ENCODE measurements at regions of chr3 and their contacts with region 1.

Region 1: GRCh38 chr3:57597122-57597923 is at the start of gene ARF4:
- DNase-seq: peak; percentile 99
- ATAC-seq: peak; percentile 93
- H3K4me3 Mint-ChIP-seq: peak within 1 kb of the TSS; percentile 90
- H3K27ac Mint-ChIP-seq: peak within 1 kb of the TSS; percentile 100
- H3K4me1 Mint-ChIP-seq: peaks cover 35% of the 10 kb centered on the region
- H3K27me3 Mint-ChIP-seq: no peaks in the 10 kb centered on the region
- CTCF ChIP-seq: no peak
- total RNA-seq, gene ARF4: 52.0 to 55.2 TPM

Region 2: GRCh38 chr3:57184526-57184925 is 412.8 kb before region 1 on chr3:
- CTCF ChIA-PET with region 1: no interaction called
- POLR2A ChIA-PET with region 1: no interaction called
- intact Hi-C with region 1: no loop called
- DNase-seq: no peak
- ATAC-seq: no peak
- H3K4me3 Mint-ChIP-seq: no peak overlapping the region
- H3K27ac Mint-ChIP-seq: no peak overlapping the region
- H3K4me1 Mint-ChIP-seq: no peaks in the 10 kb centered on the region
- H3K27me3 Mint-ChIP-seq: peaks cover 3% of the 10 kb centered on the region
- CTCF ChIP-seq: no peak

Region 3: DNA sequence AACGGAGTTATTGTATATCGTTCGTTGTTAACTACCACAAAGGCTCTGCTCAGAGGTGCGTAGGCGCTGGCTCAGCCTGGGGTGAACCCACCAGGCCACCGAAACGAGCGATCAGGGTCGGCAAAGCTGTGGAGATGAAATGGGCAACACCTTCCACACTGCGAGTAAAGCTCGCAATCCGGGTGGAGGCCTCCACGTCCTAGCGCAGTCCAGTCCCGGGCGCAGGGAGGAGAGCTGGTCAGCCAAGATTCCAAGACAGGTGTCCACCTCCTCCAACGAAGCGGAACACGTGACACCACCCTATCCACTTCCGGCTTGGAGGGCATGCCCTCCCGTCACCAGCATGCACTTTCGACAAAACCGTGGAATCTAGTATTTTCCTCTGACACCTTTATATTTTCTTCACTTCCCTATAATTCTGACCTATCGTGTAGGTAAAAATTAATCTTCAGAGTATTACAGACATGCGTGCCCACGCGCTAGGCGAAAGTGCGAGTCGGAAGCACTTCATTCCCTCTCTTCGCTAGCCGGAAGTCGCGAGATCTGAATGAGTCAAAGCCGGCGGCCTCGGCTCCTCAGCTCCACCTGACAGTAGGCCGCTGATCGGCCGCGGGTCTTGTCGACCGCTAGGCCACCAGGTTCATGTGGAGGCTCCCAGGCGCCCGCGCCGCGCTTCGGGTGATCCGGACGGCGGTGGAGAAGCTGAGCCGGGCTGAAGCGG is 41.4 kb before region 1 on chr3 and contains the start of gene PDE12:
- CTCF ChIA-PET with region 1: interaction called, 8 read pairs
- POLR2A ChIA-PET with region 1: interaction called, 47 read pairs
- intact Hi-C with region 1: loop called (anchors 5 kb)
- DNase-seq: peak; percentile 91
- ATAC-seq: peak; percentile 80
- H3K4me3 Mint-ChIP-seq: peak within 1 kb of the TSS; percentile 99
- H3K27ac Mint-ChIP-seq: peak within 1 kb of the TSS; percentile 99
- H3K4me1 Mint-ChIP-seq: peaks cover 24% of the 10 kb centered on the region
- H3K27me3 Mint-ChIP-seq: no peaks in the 10 kb centered on the region
- CTCF ChIP-seq: no peak
- total RNA-seq, gene PDE12: 25.4 to 29.9 TPM

Region 4: GRCh38 chr3:57622362-57622761 is 25.0 kb after region 1 on chr3:
- CTCF ChIA-PET with region 1: no interaction called
- POLR2A ChIA-PET with region 1: no interaction called
- intact Hi-C with region 1: no loop called
- DNase-seq: no peak
- ATAC-seq: no peak
- H3K4me3 Mint-ChIP-seq: no peak overlapping the region
- H3K27ac Mint-ChIP-seq: no peak overlapping the region
- H3K4me1 Mint-ChIP-seq: no peaks in the 10 kb centered on the region
- H3K27me3 Mint-ChIP-seq: no peaks in the 10 kb centered on the region
- CTCF ChIP-seq: no peak

Region 5: GRCh38 chr3:57692259-57693147 is 95.2 kb after region 1 on chr3 and contains the start of gene DENND6A:
- CTCF ChIA-PET with region 1: no interaction called
- POLR2A ChIA-PET with region 1: interaction called, 8 read pairs
- intact Hi-C with region 1: loop called (anchors 5 kb)
- DNase-seq: peak; percentile 80
- ATAC-seq: peak; percentile 86
- H3K4me3 Mint-ChIP-seq: peak within 1 kb of the TSS; percentile 88
- H3K27ac Mint-ChIP-seq: peak within 1 kb of the TSS; percentile 90
- H3K4me1 Mint-ChIP-seq: peaks cover 33% of the 10 kb centered on the region
- H3K27me3 Mint-ChIP-seq: no peaks in the 10 kb centered on the region
- CTCF ChIP-seq: no peak
- total RNA-seq, gene DENND6A: 10.1 to 13.1 TPM

Region 6: GRCh38 chr3:57715686-57716085 is 118.4 kb after region 1 on chr3:
- CTCF ChIA-PET with region 1: no interaction called
- POLR2A ChIA-PET with region 1: no interaction called
- intact Hi-C with region 1: no loop called
- DNase-seq: no peak
- ATAC-seq: no peak
- H3K4me3 Mint-ChIP-seq: no peak overlapping the region
- H3K27ac Mint-ChIP-seq: no peak overlapping the region
- H3K4me1 Mint-ChIP-seq: no peaks in the 10 kb centered on the region
- H3K27me3 Mint-ChIP-seq: no peaks in the 10 kb centered on the region
- CTCF ChIP-seq: no peak

Region 7: DNA sequence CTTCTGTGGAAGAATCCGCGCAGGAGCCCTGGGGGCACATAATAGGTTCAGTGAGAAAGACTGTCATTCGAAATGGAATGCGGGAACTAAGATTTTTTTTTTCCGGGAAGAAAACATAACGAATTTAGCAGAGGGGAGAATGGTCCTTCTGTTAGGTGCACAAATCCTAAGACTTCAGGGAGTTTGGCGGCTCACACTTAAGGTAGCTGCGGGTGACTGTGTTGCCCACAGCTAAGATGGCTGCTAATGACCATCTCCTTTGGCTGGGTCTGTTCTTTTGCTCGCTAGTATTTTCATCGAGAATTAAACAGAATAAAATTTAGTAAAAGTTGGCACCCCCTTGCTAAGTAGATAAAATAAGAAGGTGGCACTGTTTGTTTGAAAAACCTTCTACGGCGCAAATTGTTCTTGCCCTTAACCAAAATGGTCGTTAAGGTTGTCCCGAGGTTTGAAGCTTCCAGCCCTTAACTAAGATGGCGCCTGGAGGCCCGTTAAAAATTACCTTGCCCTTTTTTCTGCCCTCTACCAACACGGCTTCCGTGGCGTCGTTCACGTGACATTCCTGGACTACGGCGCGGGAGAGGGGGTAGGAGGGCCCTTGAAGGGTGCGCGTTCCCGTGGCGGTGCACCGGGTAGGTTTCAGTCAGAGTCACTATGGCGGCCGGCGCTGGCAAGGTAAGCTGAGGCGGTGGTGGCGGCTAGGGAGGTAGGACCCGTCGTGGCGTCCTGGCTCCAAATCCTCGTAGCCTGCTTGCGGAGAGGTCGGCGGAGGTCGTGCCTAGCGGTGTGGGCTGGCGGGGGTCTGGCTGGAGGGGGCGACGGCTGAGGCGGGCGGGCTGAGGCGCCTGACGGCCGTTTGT is 158.6 kb after region 1 on chr3 and contains the start of gene SLMAP:
- CTCF ChIA-PET with region 1: interaction called, 4 read pairs
- POLR2A ChIA-PET with region 1: interaction called, 12 read pairs
- intact Hi-C with region 1: loop called (anchors 5 kb)
- DNase-seq: peak; percentile 98
- ATAC-seq: peak; percentile 94
- H3K4me3 Mint-ChIP-seq: peak within 1 kb of the TSS; percentile 96
- H3K27ac Mint-ChIP-seq: peak within 1 kb of the TSS; percentile 96
- H3K4me1 Mint-ChIP-seq: peaks cover 35% of the 10 kb centered on the region
- H3K27me3 Mint-ChIP-seq: no peaks in the 10 kb centered on the region
- CTCF ChIP-seq: no peak
- total RNA-seq, gene SLMAP: 45.8 to 47.3 TPM

Region 8: DNA sequence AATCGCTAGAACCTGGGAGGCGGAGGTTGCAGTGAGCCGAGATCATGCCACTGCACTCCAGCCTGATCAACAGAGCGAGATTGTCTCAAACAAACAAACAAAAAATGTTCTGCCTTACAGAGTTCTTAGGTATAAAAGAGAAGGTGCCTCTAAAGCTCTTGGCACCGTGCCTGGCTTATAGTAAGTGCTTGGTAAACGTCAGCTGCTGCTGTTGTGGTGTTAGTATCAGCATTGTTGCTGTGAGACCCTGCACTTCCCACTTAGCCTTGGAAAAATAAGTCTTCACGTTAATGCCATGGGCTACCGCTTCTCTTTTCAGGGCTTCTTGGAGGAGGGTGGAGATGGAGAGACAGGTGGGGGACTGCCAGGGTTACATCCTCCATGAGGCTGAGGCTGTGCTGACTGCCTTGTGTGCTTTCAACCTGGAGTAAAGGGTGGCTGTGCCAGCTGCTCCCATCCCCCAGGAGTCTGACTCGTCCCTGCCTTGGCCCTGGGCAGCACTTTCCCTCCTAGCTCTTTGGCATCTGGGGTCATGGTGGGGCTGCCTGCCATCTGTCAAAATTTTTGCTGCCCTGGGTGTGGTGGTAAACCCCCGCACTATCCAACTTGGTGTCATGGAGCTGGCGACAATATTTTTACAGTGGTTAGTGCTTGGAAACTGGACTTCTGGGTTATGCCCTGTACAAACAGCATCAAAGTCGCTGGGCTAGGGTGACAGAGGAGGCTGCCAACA is 428.7 kb after region 1 on chr3:
- CTCF ChIA-PET with region 1: no interaction called
- POLR2A ChIA-PET with region 1: no interaction called
- intact Hi-C with region 1: no loop called
- DNase-seq: no peak
- ATAC-seq: peak; percentile 28
- H3K4me3 Mint-ChIP-seq: no peak overlapping the region
- H3K27ac Mint-ChIP-seq: no peak overlapping the region
- H3K4me1 Mint-ChIP-seq: peaks cover 48% of the 10 kb centered on the region
- H3K27me3 Mint-ChIP-seq: no peaks in the 10 kb centered on the region
- CTCF ChIP-seq: no peak

Measured in activated CD8-positive, alpha-beta T cell treated with anti-CD3 and anti-CD28 coated beads for 36 hours (primary cell).